ENCODE measurements at regions of chr2 and their contacts with region 1.

Region 1: DNA sequence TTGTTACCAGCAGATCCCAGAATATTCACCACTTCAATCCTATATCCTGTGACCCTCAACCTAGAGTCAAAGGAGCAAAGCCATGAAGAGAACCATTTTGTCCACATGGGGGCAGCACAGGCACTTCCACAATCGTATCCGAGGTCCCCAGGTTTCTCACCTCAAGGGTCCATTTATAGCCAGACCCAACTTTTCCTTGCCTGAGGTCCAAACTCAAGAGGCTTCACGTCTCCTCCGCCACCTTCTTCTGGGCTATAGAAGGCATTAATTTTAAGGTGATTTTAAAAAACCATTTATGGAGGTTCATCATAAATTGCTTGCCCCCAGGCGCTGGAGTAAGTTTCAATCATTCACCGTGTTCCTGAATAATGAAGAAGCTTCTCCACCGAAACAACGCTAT is 111.6 kb upstream of the NABP1 start:
- DNase-seq: peak; percentile 57
- ATAC-seq: peak; percentile 89
- H3K4me3 ChIP-seq: no peak overlapping the region
- H3K27ac ChIP-seq: no peak overlapping the region
- H3K4me1 ChIP-seq: peaks cover 2 to 7% of the 10 kb centered on the region in 2 experiments; a peak in 2 of 4 replicates
- H3K27me3 ChIP-seq: no peaks in the 10 kb centered on the region
- CTCF ChIP-seq: peak; percentile 67 to 85 (median 81)
- POLR2A ChIP-seq: no peak
- RAD21 ChIP-seq: peak; percentile 84

Region 2: GRCh38 chr2:191691016-191691735 is 124.8 kb after region 1 on chr2:
- CTCF ChIA-PET with region 1: interaction called, 4 read pairs
- POLR2A ChIA-PET with region 1: interaction called, 3 read pairs
- RAD21 ChIA-PET with region 1: no interaction called
- intact Hi-C with region 1: loop called (anchors 1 kb)
- DNase-seq: peak; percentile 61
- ATAC-seq: peak; percentile 79
- H3K4me3 ChIP-seq: no peak overlapping the region
- H3K27ac ChIP-seq: no peak overlapping the region
- H3K4me1 ChIP-seq: peaks cover 19 to 37% of the 10 kb centered on the region in 2 experiments
- H3K27me3 ChIP-seq: no peaks in the 10 kb centered on the region
- CTCF ChIP-seq: peak; percentile 68 to 82 (median 73); a peak in 5 of 6 replicates
- POLR2A ChIP-seq: no peak
- RAD21 ChIP-seq: peak; percentile 83

Region 3: GRCh38 chr2:191797960-191798876 is 231.9 kb after region 1 on chr2:
- CTCF ChIA-PET with region 1: no interaction called
- POLR2A ChIA-PET with region 1: no interaction called
- RAD21 ChIA-PET with region 1: no interaction called
- intact Hi-C with region 1: loop called (anchors 5 kb)
- DNase-seq: no peak
- ATAC-seq: no peak
- H3K4me3 ChIP-seq: no peak overlapping the region
- H3K27ac ChIP-seq: no peak overlapping the region
- H3K4me1 ChIP-seq: no peaks in the 10 kb centered on the region
- H3K27me3 ChIP-seq: no peaks in the 10 kb centered on the region
- CTCF ChIP-seq: no peak
- POLR2A ChIP-seq: no peak
- RAD21 ChIP-seq: no peak

Region 4: GRCh38 chr2:192585418-192585817 is 1019.1 kb after region 1 on chr2:
- CTCF ChIA-PET with region 1: no interaction called
- POLR2A ChIA-PET with region 1: no interaction called
- RAD21 ChIA-PET with region 1: no interaction called
- intact Hi-C with region 1: no loop called
- DNase-seq: no peak
- ATAC-seq: no peak
- H3K4me3 ChIP-seq: no peak overlapping the region
- H3K27ac ChIP-seq: no peak overlapping the region
- H3K4me1 ChIP-seq: no peaks in the 10 kb centered on the region
- H3K27me3 ChIP-seq: no peaks in the 10 kb centered on the region
- CTCF ChIP-seq: no peak
- POLR2A ChIP-seq: no peak
- RAD21 ChIP-seq: no peak